ENCODE measurements at regions of chr10 and their contacts with region 1.

Region 1: GRCh38 chr10:79149662-79150443 is 81.1 kb downstream of the ZMIZ1 start:
- DNase-seq: peak; percentile 97
- H3K4me3 Mint-ChIP-seq: peak overlapping the region; percentile 16
- H3K27ac Mint-ChIP-seq: peak overlapping the region; percentile 77
- H3K4me1 Mint-ChIP-seq: peaks cover 45% of the 10 kb centered on the region
- H3K27me3 Mint-ChIP-seq: no peaks in the 10 kb centered on the region
- CTCF ChIP-seq: no peak

Region 2: GRCh38 chr10:79139124-79139835 is 10.6 kb before region 1 on chr10:
- CTCF ChIA-PET with region 1: no interaction called
- POLR2A ChIA-PET with region 1: no interaction called
- intact Hi-C with region 1: no loop called
- DNase-seq: no peak
- H3K4me3 Mint-ChIP-seq: no peak overlapping the region
- H3K27ac Mint-ChIP-seq: no peak overlapping the region
- H3K4me1 Mint-ChIP-seq: peaks cover 16% of the 10 kb centered on the region
- H3K27me3 Mint-ChIP-seq: no peaks in the 10 kb centered on the region
- CTCF ChIP-seq: no peak

Region 3: GRCh38 chr10:79184145-79184625 is 34.3 kb after region 1 on chr10:
- CTCF ChIA-PET with region 1: no interaction called
- POLR2A ChIA-PET with region 1: interaction called, 3 read pairs
- intact Hi-C with region 1: loop called (anchors 2 kb)
- DNase-seq: peak; percentile 89
- H3K4me3 Mint-ChIP-seq: no peak overlapping the region
- H3K27ac Mint-ChIP-seq: no peak overlapping the region
- H3K4me1 Mint-ChIP-seq: peaks cover 26% of the 10 kb centered on the region
- H3K27me3 Mint-ChIP-seq: no peaks in the 10 kb centered on the region
- CTCF ChIP-seq: no peak

Measured in MCF 10A (cell line).